ENCODE measurements at regions of chr1 and their contacts with region 1.

Region 1: DNA sequence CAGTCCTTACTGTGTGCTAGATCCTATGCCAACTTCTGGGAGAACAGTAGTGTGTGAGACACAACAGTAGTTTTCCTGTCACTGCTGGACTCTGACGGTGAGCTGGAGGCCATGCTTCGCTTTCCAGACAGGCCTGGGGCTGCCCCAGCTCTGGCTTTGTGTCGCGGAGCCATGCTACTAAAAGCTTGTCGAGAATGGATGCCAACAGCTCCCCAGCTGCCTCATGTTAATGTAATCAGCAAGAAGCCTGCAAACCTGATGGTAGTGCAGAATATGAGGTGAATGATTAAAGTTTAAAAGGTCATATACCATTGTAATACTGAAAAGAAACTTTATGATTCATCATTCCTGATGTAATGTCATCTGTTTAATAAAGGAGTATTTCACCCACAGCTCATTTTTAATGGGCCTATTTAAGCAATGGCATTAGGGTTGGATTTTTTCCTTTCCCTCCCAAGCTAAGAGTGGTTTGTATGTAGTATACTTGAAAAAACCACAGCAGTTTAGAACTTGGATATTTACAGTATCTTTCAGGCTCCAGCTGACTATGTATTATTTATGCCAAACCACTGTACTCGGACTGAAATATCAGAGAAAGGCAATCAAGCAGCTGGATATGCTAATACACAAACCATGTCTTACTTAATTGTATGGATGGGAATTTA is 343.0 kb downstream of the NUF2 start:
- DNase-seq: no peak
- ATAC-seq: peak; percentile 37
- H3K4me3 ChIP-seq: no peak overlapping the region
- H3K27ac ChIP-seq: no peak overlapping the region
- H3K4me1 ChIP-seq: no peaks in the 10 kb centered on the region
- H3K27me3 ChIP-seq: no peaks in the 10 kb centered on the region
- CTCF ChIP-seq: no peak

Region 2: DNA sequence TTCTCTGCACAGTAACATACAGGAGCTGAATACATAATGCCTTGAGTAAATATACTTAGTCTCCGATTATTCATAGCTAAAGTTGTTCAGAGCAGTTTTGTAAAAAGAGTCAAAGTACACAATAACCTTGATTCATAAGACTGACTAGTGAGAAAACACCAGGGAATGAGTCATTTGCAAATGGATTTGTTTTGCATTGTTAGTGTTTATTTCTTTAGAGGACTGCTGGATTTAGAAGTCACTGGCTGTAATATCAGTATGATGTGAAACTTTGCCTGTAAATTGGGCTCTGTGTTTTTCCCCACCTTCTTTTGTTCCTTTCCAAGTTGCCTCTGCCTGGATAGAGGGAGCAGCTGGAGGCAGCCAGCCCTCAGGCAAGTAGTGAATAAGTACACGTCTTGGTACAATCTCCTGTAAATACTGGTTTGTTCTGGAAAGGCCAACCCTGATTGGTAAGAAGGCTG is 131.6 kb after region 1 on chr1:
- CTCF ChIA-PET with region 1: no interaction called
- POLR2A ChIA-PET with region 1: no interaction called
- intact Hi-C with region 1: loop called (anchors 5 kb)
- DNase-seq: peak; percentile 84
- ATAC-seq: peak; percentile 98
- H3K4me3 ChIP-seq: no peak overlapping the region
- H3K27ac ChIP-seq: peak overlapping the region; percentile 48
- H3K4me1 ChIP-seq: peaks cover 16% of the 10 kb centered on the region
- H3K27me3 ChIP-seq: no peaks in the 10 kb centered on the region
- CTCF ChIP-seq: no peak

Measured in PC-3 (cell line).